ENCODE measurements at regions of chr1 and their contacts with region 1.

Region 1: GRCh38 chr1:229227298-229227919 is 43.5 kb upstream of the RAB4A start:
- DNase-seq: peak; percentile 66
- H3K4me3 Mint-ChIP-seq: no peak overlapping the region
- H3K27ac Mint-ChIP-seq: no peak overlapping the region
- H3K4me1 Mint-ChIP-seq: peaks cover 11% of the 10 kb centered on the region
- H3K27me3 Mint-ChIP-seq: peaks cover 15% of the 10 kb centered on the region

Region 2: GRCh38 chr1:228664399-228664914 is 563.0 kb before region 1 on chr1:
- intact Hi-C with region 1: loop called (anchors 1 kb)
- DNase-seq: peak; percentile 55
- H3K4me3 Mint-ChIP-seq: no peak overlapping the region
- H3K27ac Mint-ChIP-seq: no peak overlapping the region
- H3K4me1 Mint-ChIP-seq: no peaks in the 10 kb centered on the region
- H3K27me3 Mint-ChIP-seq: peaks cover 15% of the 10 kb centered on the region

Region 3: DNA sequence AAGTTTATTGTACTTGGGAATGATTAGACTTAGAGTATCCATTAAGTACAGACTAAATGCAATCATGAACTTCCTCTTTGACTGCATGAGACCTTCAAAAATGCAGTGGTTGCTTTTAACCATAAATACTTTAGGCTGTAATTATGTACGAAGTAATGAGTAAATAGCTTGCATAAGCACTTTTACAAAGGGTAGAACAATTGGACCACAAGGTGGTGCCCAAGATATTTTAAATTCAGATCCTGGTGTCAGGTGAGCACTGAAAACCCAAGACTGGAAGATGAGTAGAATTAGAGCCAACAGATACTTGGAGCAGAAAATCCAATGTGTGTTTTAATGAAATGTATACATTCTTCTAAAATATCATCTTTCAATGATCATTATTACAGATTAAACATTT is 535.5 kb before region 1 on chr1:
- intact Hi-C with region 1: loop called (anchors 1 kb)
- DNase-seq: no peak
- H3K4me3 Mint-ChIP-seq: no peak overlapping the region
- H3K27ac Mint-ChIP-seq: no peak overlapping the region
- H3K4me1 Mint-ChIP-seq: no peaks in the 10 kb centered on the region
- H3K27me3 Mint-ChIP-seq: peaks cover 2% of the 10 kb centered on the region

Region 4: GRCh38 chr1:228860911-228861831 is 366.2 kb before region 1 on chr1:
- intact Hi-C with region 1: loop called (anchors 5 kb)
- DNase-seq: no peak
- H3K4me3 Mint-ChIP-seq: no peak overlapping the region
- H3K27ac Mint-ChIP-seq: no peak overlapping the region
- H3K4me1 Mint-ChIP-seq: peaks cover 37% of the 10 kb centered on the region
- H3K27me3 Mint-ChIP-seq: peaks cover 21% of the 10 kb centered on the region

Region 5: DNA sequence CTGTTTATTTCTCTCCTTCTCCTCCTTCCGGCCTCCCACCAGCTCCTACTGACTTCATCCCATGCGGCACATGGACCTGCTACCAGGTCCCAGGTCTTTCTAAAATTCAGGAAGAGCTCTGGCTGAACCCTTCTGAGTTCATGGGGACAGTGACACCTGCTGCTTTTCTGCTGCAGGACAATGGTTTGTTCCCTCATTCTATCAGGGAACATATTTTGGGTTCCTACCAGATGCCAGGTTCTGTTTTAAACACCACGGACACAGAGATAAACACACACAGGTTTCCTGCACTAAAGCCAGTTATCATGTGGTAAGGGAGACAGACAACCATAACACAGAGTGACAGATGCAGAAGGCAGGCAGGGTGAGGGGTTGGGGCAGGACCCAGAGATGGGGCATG is 70.5 kb before region 1 on chr1:
- intact Hi-C with region 1: no loop called
- DNase-seq: no peak
- H3K4me3 Mint-ChIP-seq: no peak overlapping the region
- H3K27ac Mint-ChIP-seq: no peak overlapping the region
- H3K4me1 Mint-ChIP-seq: peaks cover 15% of the 10 kb centered on the region
- H3K27me3 Mint-ChIP-seq: peaks cover 2% of the 10 kb centered on the region